Activated CD8-positive, alpha-beta T cell treated with anti-CD3 and anti-CD28 coated beads for 36 hours (primary cell): ENCODE measurements at regions of chr6 and their contacts with region 1.

Region 1: GRCh38 chr6:134097114-134097707 is 44.8 kb upstream of the SLC2A12 start:
- DNase-seq: peak; percentile 72
- ATAC-seq: peak; percentile 49
- H3K4me3 Mint-ChIP-seq: no peak overlapping the region
- H3K27ac Mint-ChIP-seq: no peak overlapping the region
- H3K4me1 Mint-ChIP-seq: no peaks in the 10 kb centered on the region
- H3K27me3 Mint-ChIP-seq: peaks cover 14% of the 10 kb centered on the region
- CTCF ChIP-seq: peak; percentile 67

Region 2: GRCh38 chr6:133916650-133917151 is 180.5 kb before region 1 on chr6:
- CTCF ChIA-PET with region 1: interaction called, 410 read pairs
- POLR2A ChIA-PET with region 1: no interaction called
- intact Hi-C with region 1: no loop called
- DNase-seq: peak; percentile 93
- ATAC-seq: peak; percentile 76
- H3K4me3 Mint-ChIP-seq: no peak overlapping the region
- H3K27ac Mint-ChIP-seq: no peak overlapping the region
- H3K4me1 Mint-ChIP-seq: peaks cover 4% of the 10 kb centered on the region
- H3K27me3 Mint-ChIP-seq: peaks cover 22% of the 10 kb centered on the region
- CTCF ChIP-seq: peak; percentile 92

Region 3: GRCh38 chr6:133973109-133973971 is 123.9 kb before region 1 on chr6:
- CTCF ChIA-PET with region 1: interaction called, 51 read pairs
- POLR2A ChIA-PET with region 1: no interaction called
- intact Hi-C with region 1: loop called (anchors 1 kb)
- DNase-seq: no peak
- ATAC-seq: peak; percentile 78
- H3K4me3 Mint-ChIP-seq: no peak overlapping the region
- H3K27ac Mint-ChIP-seq: peak overlapping the region; percentile 52
- H3K4me1 Mint-ChIP-seq: peaks cover 50% of the 10 kb centered on the region
- H3K27me3 Mint-ChIP-seq: no peaks in the 10 kb centered on the region
- CTCF ChIP-seq: peak; percentile 89

Region 4: DNA sequence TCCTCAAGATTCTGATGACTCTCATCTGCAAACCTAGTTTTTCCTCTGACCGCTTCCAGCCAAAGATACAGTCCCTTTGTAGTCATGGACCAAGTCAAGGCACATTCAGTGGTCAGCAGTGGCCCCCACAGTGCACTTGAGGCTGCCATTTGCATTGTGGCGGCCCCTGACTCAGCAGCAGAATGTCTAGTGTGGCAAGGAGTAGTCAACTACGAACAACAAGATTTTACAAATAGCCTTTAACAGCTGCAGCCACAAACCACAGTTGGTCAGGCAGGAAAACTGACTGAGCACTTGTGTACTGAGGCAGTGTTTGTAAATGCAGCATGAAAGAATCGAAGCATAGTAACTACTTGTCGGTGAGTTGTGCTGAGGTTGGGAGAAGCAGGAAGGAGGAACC is 94.4 kb before region 1 on chr6:
- CTCF ChIA-PET with region 1: interaction called, 10 read pairs
- POLR2A ChIA-PET with region 1: no interaction called
- intact Hi-C with region 1: no loop called
- DNase-seq: no peak
- ATAC-seq: no peak
- H3K4me3 Mint-ChIP-seq: no peak overlapping the region
- H3K27ac Mint-ChIP-seq: no peak overlapping the region
- H3K4me1 Mint-ChIP-seq: no peaks in the 10 kb centered on the region
- H3K27me3 Mint-ChIP-seq: peaks cover 10% of the 10 kb centered on the region
- CTCF ChIP-seq: no peak

Region 5: DNA sequence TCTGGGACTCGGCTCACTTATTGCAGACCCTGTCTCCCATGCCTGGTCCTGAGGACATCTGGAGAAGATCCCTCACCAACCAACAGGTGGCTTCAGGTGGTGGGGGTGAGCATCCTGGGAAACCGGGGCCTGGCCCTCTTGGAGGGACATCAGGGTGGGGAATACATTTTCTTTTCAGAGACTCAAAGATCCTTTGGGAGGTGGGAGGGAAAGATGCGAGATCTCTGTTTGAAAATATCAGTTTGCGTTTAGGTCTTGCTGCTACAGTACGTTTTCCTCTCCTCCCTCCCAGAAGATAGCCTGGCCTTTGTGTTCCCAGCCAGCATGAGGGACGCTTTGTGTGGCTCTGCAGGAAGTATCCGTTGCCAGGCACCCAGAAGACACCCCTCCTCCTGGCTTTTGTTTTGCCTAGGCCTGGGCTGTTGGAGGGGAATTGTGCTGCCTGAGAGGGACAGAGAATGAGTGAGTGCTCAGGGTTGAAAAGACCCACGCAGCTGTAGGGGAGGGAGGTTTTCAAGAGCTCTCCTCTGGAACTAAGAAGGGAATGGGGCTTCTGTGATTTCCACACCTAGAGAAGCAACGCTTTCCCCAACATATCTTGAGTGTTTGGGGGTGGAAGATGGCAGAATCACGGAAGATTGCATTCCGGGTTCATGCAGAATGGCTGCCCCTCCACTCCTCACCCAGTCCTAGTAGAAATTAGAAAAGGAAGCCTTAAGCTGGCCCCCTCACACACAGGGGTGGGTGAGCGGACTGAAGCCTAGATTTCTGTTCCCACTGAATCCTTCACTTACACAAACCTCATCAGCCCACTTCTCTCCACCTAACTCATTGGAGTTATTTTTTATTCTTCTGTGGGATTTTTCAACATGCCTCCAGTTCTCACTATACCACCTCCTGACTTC is 22.8 kb before region 1 on chr6:
- CTCF ChIA-PET with region 1: interaction called, 16 read pairs
- POLR2A ChIA-PET with region 1: no interaction called
- intact Hi-C with region 1: no loop called
- DNase-seq: no peak
- ATAC-seq: no peak
- H3K4me3 Mint-ChIP-seq: no peak overlapping the region
- H3K27ac Mint-ChIP-seq: no peak overlapping the region
- H3K4me1 Mint-ChIP-seq: peaks cover 4% of the 10 kb centered on the region
- H3K27me3 Mint-ChIP-seq: no peaks in the 10 kb centered on the region
- CTCF ChIP-seq: no peak

Region 6: GRCh38 chr6:134111062-134111677 is 14.0 kb after region 1 on chr6:
- CTCF ChIA-PET with region 1: interaction called, 33 read pairs
- POLR2A ChIA-PET with region 1: no interaction called
- intact Hi-C with region 1: no loop called
- DNase-seq: peak; percentile 66
- ATAC-seq: peak; percentile 85
- H3K4me3 Mint-ChIP-seq: no peak overlapping the region
- H3K27ac Mint-ChIP-seq: no peak overlapping the region
- H3K4me1 Mint-ChIP-seq: peaks cover 4% of the 10 kb centered on the region
- H3K27me3 Mint-ChIP-seq: peaks cover 7% of the 10 kb centered on the region
- CTCF ChIP-seq: peak; percentile 88